ENCODE measurements at regions of chr7 and their contacts with region 1.

Region 1: DNA sequence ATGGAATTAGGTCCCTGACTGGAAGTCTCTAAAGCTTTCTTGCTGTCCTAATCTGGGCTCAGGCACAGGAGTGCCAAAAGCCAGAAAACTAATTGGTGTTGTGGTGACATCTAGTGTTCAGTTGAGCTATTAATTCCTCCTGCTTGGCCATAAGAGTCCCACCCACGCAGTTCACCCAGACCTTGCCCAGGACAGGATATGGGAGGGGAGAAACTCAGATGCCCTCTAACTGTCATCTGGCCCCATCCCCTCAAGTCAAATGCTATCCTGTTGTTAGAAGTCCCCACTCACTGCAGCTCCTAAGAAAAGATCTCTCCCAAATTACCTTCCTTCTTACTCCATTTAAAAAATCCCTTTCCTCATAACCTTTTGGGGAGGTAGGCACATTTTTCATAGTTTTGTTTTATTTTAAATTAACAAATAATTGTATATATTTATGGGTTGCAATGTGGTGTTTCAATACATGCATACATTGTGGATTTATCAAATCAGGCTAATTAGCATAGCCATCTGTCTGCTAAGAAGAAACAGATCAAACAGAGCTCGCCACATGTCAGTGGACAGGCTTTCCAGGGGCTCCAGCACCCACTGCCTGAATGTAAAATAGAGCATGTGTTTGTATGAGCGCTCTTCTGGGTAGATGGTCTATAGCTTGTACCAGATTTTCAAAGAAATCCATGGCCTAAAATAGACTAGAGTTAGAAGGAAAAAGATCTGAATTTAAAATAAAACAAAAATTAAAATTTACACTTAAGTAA is 84.0 kb downstream of the GSAP start:
- DNase-seq: peak; percentile 87
- H3K4me3 Mint-ChIP-seq: no peak overlapping the region
- H3K27ac Mint-ChIP-seq: peak overlapping the region; percentile 48
- H3K4me1 Mint-ChIP-seq: peaks cover 46% of the 10 kb centered on the region
- H3K27me3 Mint-ChIP-seq: no peaks in the 10 kb centered on the region

Region 2: DNA sequence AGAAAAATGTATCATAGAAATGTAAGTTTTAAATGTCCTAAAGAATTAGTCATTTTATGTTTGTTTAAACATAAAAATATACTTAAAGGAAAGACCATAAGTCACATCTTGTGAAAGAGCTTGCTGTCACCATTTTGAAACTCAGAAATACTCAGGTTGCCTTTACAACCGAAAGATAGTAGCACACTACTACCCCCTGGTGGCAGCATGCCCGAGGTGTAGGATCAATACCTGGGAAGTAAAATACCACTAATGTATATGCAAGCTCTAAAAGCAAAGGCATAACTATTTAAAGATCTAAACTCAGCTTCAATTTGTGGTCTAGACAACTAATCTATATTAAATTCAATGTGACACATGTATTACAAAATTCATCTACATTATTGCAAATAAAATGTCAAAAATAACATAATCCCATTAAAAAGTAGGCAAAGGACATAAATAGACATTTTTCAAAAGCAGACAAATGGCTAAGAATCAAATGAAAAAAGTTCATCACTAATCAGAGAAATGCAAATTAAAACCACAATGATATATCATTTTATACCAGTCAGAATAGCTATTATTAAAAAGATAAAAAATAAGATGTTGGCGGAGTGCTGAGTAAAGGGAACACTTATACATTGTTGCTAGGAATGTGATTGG is 84.8 kb before region 1 on chr7:
- intact Hi-C with region 1: loop called (anchors 1 kb)
- DNase-seq: peak; percentile 96
- H3K4me3 Mint-ChIP-seq: no peak overlapping the region
- H3K27ac Mint-ChIP-seq: no peak overlapping the region
- H3K4me1 Mint-ChIP-seq: peaks cover 20% of the 10 kb centered on the region
- H3K27me3 Mint-ChIP-seq: peaks cover 12% of the 10 kb centered on the region

Region 3: DNA sequence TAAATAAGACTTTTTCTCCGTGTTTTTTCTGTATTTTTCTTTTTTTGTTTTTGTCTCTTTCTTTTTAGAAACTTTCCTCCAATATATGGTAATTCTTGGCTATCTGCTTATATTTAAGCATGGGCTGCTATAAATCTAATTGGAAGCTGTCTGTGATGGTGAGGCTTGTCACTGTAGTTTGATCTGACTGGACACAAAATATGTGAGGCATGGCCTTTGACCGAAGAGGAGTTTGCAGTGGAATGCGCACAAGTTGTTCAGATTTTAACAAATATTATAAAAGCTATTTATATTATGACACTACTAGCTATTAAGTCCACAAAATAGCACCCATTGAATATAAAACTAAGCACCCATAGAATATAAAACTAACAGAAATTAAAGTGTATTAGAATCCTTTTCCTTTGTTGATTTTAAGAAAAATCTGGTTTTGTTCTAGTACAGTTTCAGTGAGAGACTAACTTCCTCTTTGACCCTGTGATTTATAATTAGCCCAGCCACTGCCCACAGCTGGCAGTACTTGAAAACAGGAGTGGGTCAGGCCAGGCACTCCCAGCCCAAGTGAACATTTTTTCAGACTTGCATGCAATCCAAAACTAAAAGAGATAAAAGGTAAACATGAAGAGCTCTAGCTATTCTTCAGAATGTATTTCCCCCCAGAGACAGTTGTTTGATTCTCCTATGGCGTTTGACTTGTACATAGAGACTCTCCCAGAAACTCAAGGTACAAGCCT is 62.6 kb before region 1 on chr7:
- intact Hi-C with region 1: loop called (anchors 1 kb)
- DNase-seq: no peak
- H3K4me3 Mint-ChIP-seq: no peak overlapping the region
- H3K27ac Mint-ChIP-seq: no peak overlapping the region
- H3K4me1 Mint-ChIP-seq: peaks cover 16% of the 10 kb centered on the region
- H3K27me3 Mint-ChIP-seq: no peaks in the 10 kb centered on the region

Region 4: GRCh38 chr7:77351539-77352004 is 19.5 kb after region 1 on chr7:
- intact Hi-C with region 1: loop called (anchors 1 kb)
- DNase-seq: peak; percentile 88
- H3K4me3 Mint-ChIP-seq: peak overlapping the region; percentile 76
- H3K27ac Mint-ChIP-seq: peak overlapping the region; percentile 94
- H3K4me1 Mint-ChIP-seq: peaks cover 54% of the 10 kb centered on the region
- H3K27me3 Mint-ChIP-seq: peaks cover 4% of the 10 kb centered on the region

Region 5: GRCh38 chr7:77415823-77416622 is 83.9 kb after region 1 on chr7 and contains the start of gene GSAP:
- intact Hi-C with region 1: loop called (anchors 5 kb)
- DNase-seq: peak; percentile 86
- H3K4me3 Mint-ChIP-seq: peak within 1 kb of the TSS; percentile 66
- H3K27ac Mint-ChIP-seq: peak within 1 kb of the TSS; percentile 36
- H3K4me1 Mint-ChIP-seq: peaks cover 23% of the 10 kb centered on the region
- H3K27me3 Mint-ChIP-seq: peaks cover 6% of the 10 kb centered on the region
- total RNA-seq, gene GSAP: 2.1 and 2.8 TPM in 2 replicates

Region 6: GRCh38 chr7:77536413-77537135 is 204.5 kb after region 1 on chr7:
- intact Hi-C with region 1: loop called (anchors 5 kb)
- DNase-seq: peak; percentile 98
- H3K4me3 Mint-ChIP-seq: peak overlapping the region; percentile 98
- H3K27ac Mint-ChIP-seq: peak overlapping the region; percentile 94
- H3K4me1 Mint-ChIP-seq: peaks cover 12% of the 10 kb centered on the region
- H3K27me3 Mint-ChIP-seq: no peaks in the 10 kb centered on the region